MCF 10A (cell line): ENCODE measurements at regions of chr3 and their contacts with region 1.

Region 1: DNA sequence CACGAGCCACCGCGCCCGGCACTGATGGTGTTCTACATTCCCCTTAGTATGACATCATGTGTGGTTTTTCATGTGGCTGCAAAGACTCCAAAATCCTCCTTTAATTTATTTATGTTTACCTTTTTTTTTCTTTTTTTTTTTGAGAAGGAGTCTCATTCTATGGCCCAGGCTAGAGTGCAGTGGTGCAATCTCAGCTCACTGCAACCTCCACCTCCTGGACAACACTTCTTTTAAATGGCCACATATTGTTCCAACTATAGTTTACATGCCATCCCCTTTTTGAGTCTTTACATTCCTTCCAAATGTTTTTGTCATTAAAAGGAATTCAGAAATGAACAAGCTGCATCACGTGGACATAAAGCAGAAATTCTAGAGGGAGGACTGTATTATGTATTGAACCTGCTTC is 10.3 kb upstream of the CDV3 start:
- DNase-seq: no peak
- H3K4me3 Mint-ChIP-seq: no peak overlapping the region
- H3K27ac Mint-ChIP-seq: no peak overlapping the region
- H3K4me1 Mint-ChIP-seq: peaks cover 5% of the 10 kb centered on the region
- H3K27me3 Mint-ChIP-seq: no peaks in the 10 kb centered on the region
- CTCF ChIP-seq: no peak

Region 2: GRCh38 chr3:133374708-133375397 is 188.3 kb before region 1 on chr3:
- CTCF ChIA-PET with region 1: no interaction called
- POLR2A ChIA-PET with region 1: no interaction called
- intact Hi-C with region 1: no loop called
- DNase-seq: no peak
- H3K4me3 Mint-ChIP-seq: no peak overlapping the region
- H3K27ac Mint-ChIP-seq: no peak overlapping the region
- H3K4me1 Mint-ChIP-seq: no peaks in the 10 kb centered on the region
- H3K27me3 Mint-ChIP-seq: peaks cover 17% of the 10 kb centered on the region
- CTCF ChIP-seq: no peak

Region 3: DNA sequence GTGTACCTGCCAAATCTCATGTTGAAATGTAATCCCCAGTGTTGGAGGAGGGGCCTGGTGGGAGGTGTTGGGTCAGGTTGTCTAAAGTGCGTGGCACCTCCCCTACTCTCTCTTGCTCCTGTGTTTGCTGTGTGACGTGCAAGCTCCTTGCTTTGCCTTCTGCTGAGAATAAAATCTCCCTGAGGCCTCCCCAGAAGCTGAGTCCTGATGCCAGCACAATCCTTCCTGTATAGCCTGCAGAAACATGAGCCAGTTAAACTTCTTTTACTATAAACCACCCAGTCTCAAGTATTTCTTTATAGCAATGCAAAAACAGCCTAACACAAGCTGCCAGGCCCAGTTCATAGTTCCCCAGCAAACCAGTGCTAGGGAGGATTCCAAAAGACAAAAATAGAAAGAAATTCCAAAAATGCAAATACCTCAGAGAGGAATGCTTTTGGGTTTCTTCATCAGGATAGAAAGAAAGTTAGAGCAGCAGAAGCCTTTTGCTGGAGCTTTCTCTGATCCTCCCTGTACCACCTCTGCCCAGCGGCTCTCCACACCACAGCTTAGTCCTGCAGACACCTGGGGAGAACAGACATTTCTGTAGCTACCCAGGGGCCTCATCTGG is 15.7 kb before region 1 on chr3:
- CTCF ChIA-PET with region 1: interaction called, 11 read pairs
- POLR2A ChIA-PET with region 1: interaction called, 15 read pairs
- intact Hi-C with region 1: no loop called
- DNase-seq: peak; percentile 47
- H3K4me3 Mint-ChIP-seq: no peak overlapping the region
- H3K27ac Mint-ChIP-seq: no peak overlapping the region
- H3K4me1 Mint-ChIP-seq: peaks cover 18% of the 10 kb centered on the region
- H3K27me3 Mint-ChIP-seq: no peaks in the 10 kb centered on the region
- CTCF ChIP-seq: no peak